ENCODE measurements at regions of chr13 and their contacts with region 1.

Region 1: DNA sequence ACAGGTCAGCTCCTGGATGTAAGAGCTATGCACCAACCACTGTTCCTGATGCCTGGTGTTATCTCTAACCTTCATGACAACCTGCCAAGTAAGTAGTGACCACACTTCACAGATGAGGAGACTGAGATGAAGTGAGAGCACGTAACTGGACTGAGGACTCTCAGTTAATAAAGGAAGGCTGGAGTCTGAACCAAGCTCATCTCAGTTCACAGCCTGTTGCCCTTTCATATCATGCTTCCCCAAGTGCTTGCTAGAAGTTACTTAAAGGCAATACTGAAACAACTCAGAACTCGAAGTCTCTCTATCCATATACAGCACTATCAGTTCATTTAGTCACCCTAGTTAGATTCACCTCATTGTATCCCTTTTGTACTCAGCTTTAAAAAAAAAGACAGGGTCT is 119.7 kb downstream of the ABCC4 start:
- DNase-seq: no peak
- H3K4me3 Mint-ChIP-seq: no peak overlapping the region
- H3K27ac Mint-ChIP-seq: peak overlapping the region; percentile 63
- H3K4me1 Mint-ChIP-seq: peaks cover 65% of the 10 kb centered on the region
- H3K27me3 Mint-ChIP-seq: no peaks in the 10 kb centered on the region

Region 2: DNA sequence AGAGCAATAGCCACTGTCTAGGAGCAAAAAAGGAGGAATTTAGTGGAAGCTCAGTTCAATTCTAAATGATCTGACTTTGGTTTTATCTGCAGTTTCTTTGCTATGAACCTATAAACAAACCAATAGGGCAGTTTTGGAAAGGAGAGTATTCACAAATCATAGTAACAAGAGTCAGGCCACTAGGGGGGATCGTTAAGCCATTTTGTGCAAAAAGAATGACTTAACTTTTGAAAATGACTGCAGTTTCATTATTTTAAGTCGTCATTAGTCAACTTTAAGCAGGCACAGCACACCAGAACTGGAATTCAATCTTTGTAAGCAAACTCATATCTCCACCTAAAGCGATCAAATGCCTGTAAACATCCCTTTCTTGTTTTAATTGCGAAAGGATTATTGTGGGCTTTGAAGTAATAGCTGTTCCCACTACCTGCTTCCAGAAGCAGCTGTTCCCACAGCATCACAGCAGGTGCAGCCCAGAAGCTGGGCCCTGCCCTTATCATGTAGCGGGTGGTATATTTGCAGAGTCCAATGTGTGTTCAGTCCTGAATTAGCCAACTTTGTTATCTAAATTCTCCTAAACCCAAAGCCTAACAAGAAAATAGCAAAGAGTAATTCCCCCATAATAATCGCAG is 520.8 kb before region 1 on chr13:
- intact Hi-C with region 1: loop called (anchors 2 kb)
- DNase-seq: no peak
- H3K4me3 Mint-ChIP-seq: no peak overlapping the region
- H3K27ac Mint-ChIP-seq: no peak overlapping the region
- H3K4me1 Mint-ChIP-seq: peaks cover 37% of the 10 kb centered on the region
- H3K27me3 Mint-ChIP-seq: peaks cover 13% of the 10 kb centered on the region

Region 3: GRCh38 chr13:94667190-94667589 is 514.4 kb before region 1 on chr13:
- intact Hi-C with region 1: loop called (anchors 2 kb)
- DNase-seq: no peak
- H3K4me3 Mint-ChIP-seq: peak overlapping the region; percentile 6
- H3K27ac Mint-ChIP-seq: peak overlapping the region; percentile 87
- H3K4me1 Mint-ChIP-seq: peaks cover 48% of the 10 kb centered on the region
- H3K27me3 Mint-ChIP-seq: peaks cover 9% of the 10 kb centered on the region

Region 4: GRCh38 chr13:94968757-94969086 is 212.9 kb before region 1 on chr13:
- intact Hi-C with region 1: no loop called
- DNase-seq: no peak
- H3K4me3 Mint-ChIP-seq: peak overlapping the region; percentile 13
- H3K27ac Mint-ChIP-seq: no peak overlapping the region
- H3K4me1 Mint-ChIP-seq: peaks cover 7% of the 10 kb centered on the region
- H3K27me3 Mint-ChIP-seq: peaks cover 62% of the 10 kb centered on the region

Region 5: GRCh38 chr13:95050800-95051615 is 130.6 kb before region 1 on chr13:
- intact Hi-C with region 1: loop called (anchors 2 kb)
- DNase-seq: no peak
- H3K4me3 Mint-ChIP-seq: no peak overlapping the region
- H3K27ac Mint-ChIP-seq: peak overlapping the region; percentile 93
- H3K4me1 Mint-ChIP-seq: peaks cover 24% of the 10 kb centered on the region
- H3K27me3 Mint-ChIP-seq: no peaks in the 10 kb centered on the region

Region 6: DNA sequence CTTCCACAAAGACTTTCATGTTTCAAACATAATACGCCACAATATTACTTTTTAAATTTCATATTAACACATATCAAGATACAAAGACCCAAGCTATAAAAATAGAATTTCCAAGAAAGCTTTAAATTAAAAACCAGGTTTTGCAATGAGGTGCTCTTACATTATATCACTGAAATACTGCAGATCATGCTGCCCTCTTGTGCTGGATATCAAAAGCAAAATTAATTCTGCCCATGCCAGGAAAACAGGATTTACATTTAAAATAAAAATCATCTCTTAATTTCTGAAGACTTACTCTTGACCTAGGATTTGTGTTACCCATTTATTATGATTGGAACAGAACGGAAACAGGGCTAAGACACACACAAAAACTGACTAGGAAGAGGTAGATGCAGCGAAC is 25.4 kb before region 1 on chr13:
- intact Hi-C with region 1: loop called (anchors 2 kb)
- DNase-seq: no peak
- H3K4me3 Mint-ChIP-seq: no peak overlapping the region
- H3K27ac Mint-ChIP-seq: no peak overlapping the region
- H3K4me1 Mint-ChIP-seq: peaks cover 30% of the 10 kb centered on the region
- H3K27me3 Mint-ChIP-seq: no peaks in the 10 kb centered on the region

Region 7: GRCh38 chr13:95480131-95480545 is 298.6 kb after region 1 on chr13:
- intact Hi-C with region 1: loop called (anchors 2 kb)
- DNase-seq: no peak
- H3K4me3 Mint-ChIP-seq: no peak overlapping the region
- H3K27ac Mint-ChIP-seq: no peak overlapping the region
- H3K4me1 Mint-ChIP-seq: peaks cover 17% of the 10 kb centered on the region
- H3K27me3 Mint-ChIP-seq: peaks cover 6% of the 10 kb centered on the region

Region 8: DNA sequence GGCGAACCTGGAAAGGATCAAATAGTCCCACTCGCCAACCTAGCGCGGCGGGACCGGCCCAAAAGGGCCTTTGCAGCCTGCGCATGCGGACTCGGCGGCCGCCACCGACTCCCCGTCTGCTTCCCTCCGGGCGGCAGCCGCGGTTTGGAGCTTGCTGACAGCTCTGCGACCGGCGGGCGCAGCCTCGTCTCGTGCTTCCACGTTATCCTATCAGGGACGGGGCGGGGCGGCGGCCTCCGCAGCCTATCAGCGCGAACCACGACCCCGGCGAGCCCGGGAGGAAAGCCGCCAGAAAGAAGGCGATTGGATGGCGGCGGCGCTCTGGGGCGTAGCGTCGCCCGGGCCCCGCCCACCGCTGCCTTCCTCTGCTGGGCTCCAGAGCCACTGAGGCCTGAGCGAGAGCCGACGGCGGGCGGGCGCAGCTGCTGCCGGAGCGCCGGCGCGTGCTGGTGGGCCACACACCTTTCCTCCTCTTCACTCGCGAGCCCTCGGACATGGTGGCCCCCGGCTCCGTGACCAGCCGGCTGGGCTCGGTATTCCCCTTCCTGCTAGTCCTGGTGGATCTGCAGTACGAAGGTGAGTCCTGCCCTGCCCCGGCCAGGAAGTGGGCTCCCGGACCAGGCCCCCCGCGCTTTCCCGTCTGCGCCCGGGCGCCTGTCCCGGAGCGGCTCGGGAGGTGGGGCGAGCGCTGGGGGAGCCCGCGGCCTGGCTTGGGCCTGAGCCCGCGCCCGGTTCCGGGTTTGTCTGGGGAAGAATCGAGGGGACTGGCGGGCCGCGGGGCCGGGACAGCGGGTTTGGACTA is 495.4 kb after region 1 on chr13 and contains the start of gene DNAJC3:
- intact Hi-C with region 1: loop called (anchors 10 kb)
- DNase-seq: peak; percentile 98
- H3K4me3 Mint-ChIP-seq: peak within 1 kb of the TSS; percentile 95
- H3K27ac Mint-ChIP-seq: peak within 1 kb of the TSS; percentile 80
- H3K4me1 Mint-ChIP-seq: peaks cover 45% of the 10 kb centered on the region
- H3K27me3 Mint-ChIP-seq: no peaks in the 10 kb centered on the region
- total RNA-seq, gene DNAJC3: 28.1 and 28.6 TPM in 2 replicates

Measured in activated T-helper 2 cell treated with anti-CD3 and anti-CD28 coated beads, Interferon-gamma antibody, Interleukin-2, Interleukin-4, amounts not matched to agents 10 μg/mL and 5 μg/mL and 100 μg/mL, durations not matched to agents 14 hours and 24 hours and 36 hours (primary cell).